CD8-positive, alpha-beta T cell (primary cell): ENCODE measurements at regions of chr12 and their contacts with region 1.

Region 1: DNA sequence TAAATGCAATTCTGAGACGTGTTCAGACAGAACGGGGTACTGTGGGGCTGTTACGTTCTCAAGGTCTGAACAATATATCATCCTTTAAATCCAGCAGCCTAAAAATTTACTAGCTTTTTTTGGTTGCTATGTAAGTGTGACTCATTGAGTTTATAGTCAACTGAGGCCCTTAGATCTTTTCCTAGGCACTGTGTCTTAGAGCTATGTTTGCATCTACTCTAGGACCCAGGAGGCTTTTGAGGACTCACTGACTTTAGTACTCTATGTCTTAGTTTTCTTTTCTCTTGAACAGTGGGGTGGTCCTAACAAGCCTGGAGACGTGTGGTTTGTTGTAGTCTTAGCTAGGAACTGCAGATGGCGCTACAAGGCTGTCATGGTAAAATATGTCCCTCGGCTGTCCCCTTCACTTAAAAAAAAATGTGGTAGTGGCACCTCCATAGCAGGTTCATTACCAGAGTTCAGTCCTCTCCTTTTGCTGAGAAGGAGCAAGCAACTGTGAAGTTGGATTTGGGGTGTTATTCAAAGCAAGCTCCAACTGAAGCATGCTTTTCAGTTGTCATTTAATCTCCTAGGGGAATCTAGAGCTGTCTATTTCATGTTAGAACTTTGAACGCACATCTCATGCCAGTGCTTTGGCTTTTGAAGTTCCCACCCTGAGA is 8.7 kb upstream of the SPATS2 start:
- DNase-seq: peak in 7 of 9 experiments; percentile 47 to 87 (median 63)
- ATAC-seq: peak; percentile 99
- H3K4me3 ChIP-seq: no peak overlapping the region
- H3K4me3 Mint-ChIP-seq: no peak overlapping the region
- H3K27ac ChIP-seq: no peak overlapping the region
- H3K27ac Mint-ChIP-seq: no peak overlapping the region
- H3K4me1 ChIP-seq: no peaks in the 10 kb centered on the region
- H3K4me1 Mint-ChIP-seq: peaks cover 2% of the 10 kb centered on the region
- H3K27me3 ChIP-seq: peaks cover 4 to 8% of the 10 kb centered on the region in 2 experiments
- H3K27me3 Mint-ChIP-seq: peaks cover 20% of the 10 kb centered on the region
- CTCF ChIP-seq: peak; percentile 67

Region 2: GRCh38 chr12:49296034-49296835 is 62.4 kb before region 1 on chr12:
- CTCF ChIA-PET with region 1: interaction called, 12 read pairs
- POLR2A ChIA-PET with region 1: no interaction called
- intact Hi-C with region 1: no loop called
- DNase-seq: peak; percentile 30 to 76 (median 66)
- ATAC-seq: peak; percentile 84
- H3K4me3 ChIP-seq: peak overlapping the region in 1 of 2 experiments; percentile 46
- H3K4me3 Mint-ChIP-seq: peak overlapping the region; percentile 60
- H3K27ac ChIP-seq: no peak overlapping the region
- H3K27ac Mint-ChIP-seq: no peak overlapping the region
- H3K4me1 ChIP-seq: peaks cover 13% of the 10 kb centered on the region
- H3K4me1 Mint-ChIP-seq: peaks cover 19% of the 10 kb centered on the region
- H3K27me3 ChIP-seq: peaks cover 34 to 36% of the 10 kb centered on the region in 2 experiments
- H3K27me3 Mint-ChIP-seq: peaks cover 45% of the 10 kb centered on the region
- CTCF ChIP-seq: peak; percentile 80

Region 3: DNA sequence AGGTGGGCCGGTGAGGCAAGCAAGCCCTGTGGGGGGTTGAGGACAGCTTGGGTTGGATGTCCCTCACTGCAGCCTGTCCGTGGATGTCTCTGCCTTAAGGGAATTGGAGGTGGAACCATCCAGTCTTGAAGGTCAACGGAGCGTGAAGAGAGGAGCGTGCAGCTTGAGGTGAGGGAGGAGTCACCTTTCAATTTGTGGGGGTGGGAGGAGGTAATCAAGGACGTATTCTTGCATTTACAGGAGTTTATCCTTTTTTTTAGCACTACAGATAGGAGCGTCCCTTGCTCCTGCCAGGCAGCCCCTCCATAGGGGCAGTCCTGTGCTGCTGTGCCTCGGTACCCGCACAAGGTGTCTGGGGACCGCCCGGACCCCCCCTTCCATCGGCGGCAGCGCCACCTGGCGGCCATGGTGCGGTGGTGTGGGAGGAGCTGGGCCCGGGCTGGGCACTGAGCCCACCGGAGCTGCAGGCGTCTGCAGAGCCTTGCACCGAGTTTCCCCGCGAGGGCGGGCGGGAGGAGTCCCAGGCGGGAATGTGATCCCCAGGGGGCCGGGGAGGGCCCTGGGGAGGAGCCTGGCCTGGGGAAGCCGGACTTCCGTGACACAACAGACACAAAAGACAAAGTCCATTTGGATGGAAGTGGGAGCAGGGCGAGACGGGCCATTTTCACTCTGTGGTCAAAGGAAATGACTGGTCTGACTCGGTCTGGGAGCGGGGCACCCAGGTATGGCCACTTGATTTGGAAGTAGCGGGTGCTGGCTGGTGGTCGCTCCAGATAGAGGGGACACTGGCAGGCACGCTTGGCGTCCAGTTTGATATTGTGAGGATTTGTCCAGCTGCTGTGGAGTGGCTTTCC is 11.0 kb before region 1 on chr12:
- CTCF ChIA-PET with region 1: interaction called, 56 read pairs
- POLR2A ChIA-PET with region 1: no interaction called
- intact Hi-C with region 1: no loop called
- DNase-seq: peak; percentile 68 to 91 (median 81)
- ATAC-seq: peak; percentile 78
- H3K4me3 ChIP-seq: peak overlapping the region; percentile 47 to 54
- H3K4me3 Mint-ChIP-seq: peak overlapping the region; percentile 79
- H3K27ac ChIP-seq: no peak overlapping the region
- H3K27ac Mint-ChIP-seq: no peak overlapping the region
- H3K4me1 ChIP-seq: peaks cover 45% of the 10 kb centered on the region
- H3K4me1 Mint-ChIP-seq: peaks cover 40% of the 10 kb centered on the region
- H3K27me3 ChIP-seq: peaks cover 33 to 45% of the 10 kb centered on the region in 2 experiments
- H3K27me3 Mint-ChIP-seq: peaks cover 57% of the 10 kb centered on the region
- CTCF ChIP-seq: peak; percentile 97

Region 4: DNA sequence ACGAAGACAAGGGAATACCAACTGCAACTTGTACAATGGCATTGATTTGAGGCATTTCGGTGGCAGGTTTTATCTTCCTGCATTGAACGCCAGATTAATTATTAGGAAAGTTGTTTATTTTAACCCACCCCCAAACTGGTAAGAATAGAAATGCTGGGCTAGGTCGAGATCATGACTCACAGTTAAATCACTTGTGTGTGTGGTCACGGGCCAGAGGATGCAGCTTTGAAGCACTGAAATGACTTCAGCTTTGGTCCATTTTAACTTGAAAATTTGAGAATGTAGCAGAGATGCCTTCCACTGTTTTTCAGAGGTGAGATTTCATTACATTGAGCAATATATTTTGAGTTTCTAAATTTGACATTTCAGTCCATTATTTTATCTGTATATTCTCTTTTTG is 156.7 kb after region 1 on chr12:
- CTCF ChIA-PET with region 1: interaction called, 380 read pairs
- POLR2A ChIA-PET with region 1: interaction called, 13 read pairs
- intact Hi-C with region 1: loop called (anchors 1 kb)
- DNase-seq: no peak
- ATAC-seq: no peak
- H3K4me3 ChIP-seq: no peak overlapping the region
- H3K4me3 Mint-ChIP-seq: no peak overlapping the region
- H3K27ac ChIP-seq: no peak overlapping the region
- H3K27ac Mint-ChIP-seq: no peak overlapping the region
- H3K4me1 ChIP-seq: no peaks in the 10 kb centered on the region
- H3K4me1 Mint-ChIP-seq: no peaks in the 10 kb centered on the region
- H3K27me3 ChIP-seq: no peaks in the 10 kb centered on the region
- H3K27me3 Mint-ChIP-seq: no peaks in the 10 kb centered on the region
- CTCF ChIP-seq: no peak

Region 5: DNA sequence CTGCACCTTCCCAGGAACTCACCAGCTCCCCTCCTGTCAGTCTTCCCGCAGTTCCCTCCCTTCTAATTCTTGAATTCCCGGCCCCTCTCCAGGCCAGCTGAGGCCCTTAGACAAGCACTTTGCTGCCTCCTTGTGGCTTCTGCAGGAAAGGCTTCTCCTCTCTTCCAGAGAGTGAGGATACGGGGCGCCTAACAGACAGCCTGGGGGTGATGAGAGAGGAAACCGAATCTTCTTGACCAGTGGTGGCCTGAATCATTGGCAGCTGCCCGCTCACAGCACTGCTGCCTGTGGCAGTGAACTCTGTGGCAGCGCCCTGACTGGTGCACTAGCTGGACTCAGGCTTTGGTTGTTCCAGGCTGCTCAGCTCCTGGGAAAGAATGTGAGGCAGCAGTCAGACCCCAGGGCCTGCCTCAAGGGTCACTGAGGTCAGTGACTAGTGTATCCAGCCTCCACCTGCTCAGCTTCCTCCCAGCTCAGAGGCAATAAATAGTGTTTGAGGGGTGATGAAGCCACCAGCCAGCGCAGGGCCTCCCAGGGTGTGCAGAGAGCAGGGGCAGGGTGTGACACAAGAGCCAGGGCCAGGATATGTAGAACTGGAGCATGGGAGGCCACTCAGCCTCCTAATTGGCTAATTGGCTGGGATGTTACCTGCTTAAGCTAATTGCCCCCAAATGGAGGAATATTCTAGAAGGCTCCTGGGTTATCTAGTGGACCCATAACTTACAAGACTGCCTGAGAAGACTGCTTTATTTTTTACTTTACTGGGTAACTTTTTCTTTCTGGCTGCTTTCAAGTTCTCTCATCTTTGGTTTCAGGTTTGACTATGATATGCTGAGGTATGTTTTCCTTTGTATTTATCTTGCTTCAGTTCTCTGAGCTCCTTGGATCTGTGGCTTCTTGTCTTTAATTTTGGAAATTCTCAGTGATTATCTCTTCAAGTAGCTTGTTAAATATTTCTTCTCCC is 222.2 kb after region 1 on chr12:
- CTCF ChIA-PET with region 1: interaction called, 16 read pairs
- POLR2A ChIA-PET with region 1: no interaction called
- intact Hi-C with region 1: loop called (anchors 1 to 2 kb)
- DNase-seq: peak in 8 of 9 experiments; percentile 43 to 69 (median 61)
- ATAC-seq: peak; percentile 86
- H3K4me3 ChIP-seq: no peak overlapping the region
- H3K4me3 Mint-ChIP-seq: no peak overlapping the region
- H3K27ac ChIP-seq: no peak overlapping the region
- H3K27ac Mint-ChIP-seq: no peak overlapping the region
- H3K4me1 ChIP-seq: no peaks in the 10 kb centered on the region
- H3K4me1 Mint-ChIP-seq: peaks cover 11% of the 10 kb centered on the region
- H3K27me3 ChIP-seq: no peaks in the 10 kb centered on the region
- H3K27me3 Mint-ChIP-seq: no peaks in the 10 kb centered on the region
- CTCF ChIP-seq: peak; percentile 69